ENCODE measurements at regions of chr10 and their contacts with region 1.

Region 1: GRCh38 chr10:7872041-7872442 is 53.7 kb downstream of the TAF3 start:
- DNase-seq: peak in 4 of 5 donors; percentile 37 to 44 (median 42)
- H3K4me3 ChIP-seq: no peak overlapping the region
- H3K4me3 Mint-ChIP-seq: peak overlapping the region in 7 of 8 donors; percentile 51 to 84 (median 77)
- H3K27ac ChIP-seq: no peak overlapping the region
- H3K27ac Mint-ChIP-seq: peak overlapping the region in 2 of 7 donors; percentile 35 to 84
- H3K4me1 ChIP-seq: no peaks in the 10 kb centered on the region
- H3K4me1 Mint-ChIP-seq: peaks cover 10 to 13% (median 12%) of the 10 kb centered on the region in 4 donors
- H3K27me3 ChIP-seq: no peaks in the 10 kb centered on the region
- H3K27me3 Mint-ChIP-seq: no peaks in the 10 kb centered on the region

Region 2: GRCh38 chr10:7471720-7472367 is 400.2 kb before region 1 on chr10:
- CTCF ChIA-PET with region 1: no interaction called
- POLR2A ChIA-PET with region 1: no interaction called
- intact Hi-C with region 1: no loop called
- DNase-seq: peak in 1 of 5 donors; percentile 10
- H3K4me3 ChIP-seq: peak overlapping the region in 1 of 2 donors; percentile 39
- H3K4me3 Mint-ChIP-seq: peak overlapping the region; percentile 75 to 90 (median 87)
- H3K27ac ChIP-seq: no peak overlapping the region
- H3K27ac Mint-ChIP-seq: peak overlapping the region; percentile 31 to 88 (median 81)
- H3K4me1 ChIP-seq: peaks cover 15% of the 10 kb centered on the region
- H3K4me1 Mint-ChIP-seq: peaks cover 16 to 30% (median 20%) of the 10 kb centered on the region in 4 donors
- H3K27me3 ChIP-seq: no peaks in the 10 kb centered on the region
- H3K27me3 Mint-ChIP-seq: no peaks in the 10 kb centered on the region

Region 3: GRCh38 chr10:9075422-9075821 is 1203.4 kb after region 1 on chr10:
- CTCF ChIA-PET with region 1: no interaction called
- POLR2A ChIA-PET with region 1: no interaction called
- intact Hi-C with region 1: loop called (anchors 5 kb)
- DNase-seq: no peak
- H3K4me3 ChIP-seq: no peak overlapping the region
- H3K4me3 Mint-ChIP-seq: no peak overlapping the region
- H3K27ac ChIP-seq: no peak overlapping the region
- H3K27ac Mint-ChIP-seq: no peak overlapping the region
- H3K4me1 ChIP-seq: no peaks in the 10 kb centered on the region
- H3K4me1 Mint-ChIP-seq: peaks cover 0 to 6% (median 0%) of the 10 kb centered on the region in 4 donors
- H3K27me3 ChIP-seq: no peaks in the 10 kb centered on the region
- H3K27me3 Mint-ChIP-seq: peaks cover 2 to 3% of the 10 kb centered on the region in 2 donors

Region 4: GRCh38 chr10:9302120-9302746 is 1430.2 kb after region 1 on chr10:
- CTCF ChIA-PET with region 1: interaction called, 4 read pairs
- POLR2A ChIA-PET with region 1: no interaction called
- intact Hi-C with region 1: loop called (anchors 1 kb)
- DNase-seq: peak in 4 of 5 donors; percentile 45 to 48 (median 48)
- H3K4me3 ChIP-seq: no peak overlapping the region
- H3K4me3 Mint-ChIP-seq: no peak overlapping the region
- H3K27ac ChIP-seq: no peak overlapping the region
- H3K27ac Mint-ChIP-seq: no peak overlapping the region
- H3K4me1 ChIP-seq: no peaks in the 10 kb centered on the region
- H3K4me1 Mint-ChIP-seq: no peaks in the 10 kb centered on the region
- H3K27me3 ChIP-seq: no peaks in the 10 kb centered on the region
- H3K27me3 Mint-ChIP-seq: peaks cover 9 to 13% of the 10 kb centered on the region in 2 donors

Measured in CD4-positive, alpha-beta memory T cell (primary cell).